Breast epithelium (tissue), 4 donors: ENCODE measurements at regions of chr17 and their contacts with region 1.

Region 1: GRCh38 chr17:80426681-80427326 is 11.8 kb downstream of the ENDOV start:
- DNase-seq: peak; percentile 37 to 74
- H3K4me3 ChIP-seq: no peak overlapping the region
- H3K27ac ChIP-seq: no peak overlapping the region
- H3K4me1 ChIP-seq: no peaks in the 10 kb centered on the region
- H3K27me3 ChIP-seq: no peaks in the 10 kb centered on the region
- CTCF ChIP-seq: peak; percentile 85 to 96 (median 95)
- POLR2A ChIP-seq: no peak

Region 2: DNA sequence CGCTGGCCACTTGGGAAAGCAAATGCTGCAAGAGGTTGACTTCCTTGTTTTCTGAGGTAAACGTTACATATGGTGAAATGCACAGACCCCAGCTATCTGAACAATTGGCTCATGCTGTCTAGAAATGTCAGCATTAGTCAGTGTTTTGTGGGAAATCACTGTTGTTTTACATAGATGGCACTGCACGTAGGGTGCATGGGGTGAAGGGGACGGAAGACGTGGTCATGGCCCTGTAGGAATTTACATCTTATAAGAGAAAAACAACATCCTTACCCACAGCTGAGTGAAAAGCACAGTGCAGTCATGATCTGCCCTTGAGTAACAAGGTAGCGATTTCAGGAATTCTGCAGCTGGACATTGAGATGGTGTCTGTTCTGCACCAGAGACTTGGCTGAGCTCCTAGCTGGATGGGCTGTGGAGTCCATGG is 133.0 kb after region 1 on chr17:
- intact Hi-C with region 1: loop called (anchors 10 kb)
- DNase-seq: no peak
- H3K4me3 ChIP-seq: no peak overlapping the region
- H3K27ac ChIP-seq: no peak overlapping the region
- H3K4me1 ChIP-seq: no peaks in the 10 kb centered on the region
- H3K27me3 ChIP-seq: no peaks in the 10 kb centered on the region
- CTCF ChIP-seq: no peak
- POLR2A ChIP-seq: no peak

Region 3: GRCh38 chr17:80913928-80914821 is 487.4 kb after region 1 on chr17:
- intact Hi-C with region 1: no loop called
- DNase-seq: no peak
- H3K4me3 ChIP-seq: no peak overlapping the region
- H3K27ac ChIP-seq: no peak overlapping the region
- H3K4me1 ChIP-seq: no peaks in the 10 kb centered on the region
- H3K27me3 ChIP-seq: no peaks in the 10 kb centered on the region
- CTCF ChIP-seq: no peak
- POLR2A ChIP-seq: no peak

Region 4: GRCh38 chr17:80981062-80981902 is 554.5 kb after region 1 on chr17:
- intact Hi-C with region 1: loop called (anchors 10 kb)
- DNase-seq: no peak
- H3K4me3 ChIP-seq: peak overlapping the region in 1 of 3 donors; percentile 57
- H3K27ac ChIP-seq: no peak overlapping the region
- H3K4me1 ChIP-seq: no peaks in the 10 kb centered on the region
- H3K27me3 ChIP-seq: peaks cover 8 to 14% of the 10 kb centered on the region in 2 donors
- CTCF ChIP-seq: peak in 2 of 3 donors; percentile 12 to 72
- POLR2A ChIP-seq: no peak